ENCODE measurements at regions of chr15 and their contacts with region 1.

Region 1: DNA sequence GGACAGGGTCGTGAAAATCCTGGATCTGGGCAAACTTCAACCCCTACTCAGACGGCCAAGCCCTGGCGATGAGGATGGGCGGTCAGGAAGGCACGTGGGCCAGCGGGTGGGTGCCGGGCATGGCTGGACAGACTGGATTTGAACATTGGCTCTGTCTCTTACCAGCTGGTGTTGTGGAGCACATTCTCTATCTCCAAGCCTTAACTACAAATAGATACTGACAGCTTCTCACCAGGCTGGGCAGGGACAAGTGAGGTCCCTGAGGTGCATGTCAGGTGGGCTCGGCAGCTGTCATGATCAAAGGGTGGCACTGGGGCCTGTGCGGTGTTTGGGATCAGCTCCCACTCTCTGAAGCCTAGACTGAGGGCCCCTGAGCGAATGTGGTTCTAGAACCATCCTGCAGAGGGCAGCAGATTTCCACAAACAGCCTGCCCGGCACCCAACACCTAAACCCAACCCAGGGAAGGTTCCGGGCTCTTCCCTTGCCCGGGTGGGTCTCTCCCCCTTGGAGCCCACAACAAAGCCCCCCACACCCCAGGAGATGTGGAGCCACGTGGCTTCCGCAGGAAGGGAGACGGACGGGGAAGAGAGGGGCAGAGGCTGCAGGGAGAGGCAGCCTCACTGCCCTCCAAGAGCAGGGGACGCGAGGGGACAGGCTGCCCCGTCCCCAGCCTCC is 58.4 kb downstream of the RGMA start:
- DNase-seq: peak; percentile 77
- H3K4me3 ChIP-seq: no peak overlapping the region
- H3K27ac ChIP-seq: peak overlapping the region; percentile 8 to 59
- H3K4me1 ChIP-seq: peaks cover 31% of the 10 kb centered on the region
- H3K27me3 ChIP-seq: no peaks in the 10 kb centered on the region
- CTCF ChIP-seq: peak; percentile 72 to 89 (median 86)
- POLR2A ChIP-seq: no peak

Region 2: DNA sequence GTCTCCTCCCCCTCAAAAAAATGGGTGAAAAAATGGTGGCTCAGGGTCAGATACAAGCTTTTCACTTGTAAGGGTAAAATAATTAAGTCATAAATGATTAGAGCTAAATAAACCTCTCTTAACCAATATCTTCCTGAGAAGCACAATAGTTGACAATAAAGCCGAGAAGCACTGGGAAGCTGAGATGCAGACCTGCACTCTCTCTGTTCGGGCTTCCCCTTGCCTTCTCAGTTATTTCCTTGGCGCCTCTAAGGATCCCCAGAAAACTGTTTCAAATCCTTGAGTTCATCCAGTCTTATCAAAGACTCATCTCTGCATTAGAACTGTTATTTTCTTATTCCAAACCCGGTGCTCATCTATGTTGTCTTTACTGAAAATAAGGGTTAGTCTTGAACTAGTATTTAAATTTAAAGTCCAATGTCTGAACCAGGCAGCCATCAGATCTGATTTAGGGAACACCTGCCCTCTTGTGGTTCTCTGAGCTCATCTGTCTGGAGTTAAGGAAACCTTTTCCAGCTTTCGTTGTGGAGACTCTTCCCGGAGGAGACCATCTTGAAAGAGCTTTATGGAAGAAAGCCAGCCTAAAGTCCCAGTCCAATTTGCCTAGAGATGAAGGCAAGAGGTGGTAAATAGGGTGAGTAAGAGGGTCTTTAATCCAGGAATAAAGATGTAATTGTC is 944.4 kb after region 1 on chr15:
- intact Hi-C with region 1: loop called (anchors 2 kb)
- DNase-seq: peak; percentile 27
- H3K4me3 ChIP-seq: no peak overlapping the region
- H3K27ac ChIP-seq: no peak overlapping the region
- H3K4me1 ChIP-seq: no peaks in the 10 kb centered on the region
- H3K27me3 ChIP-seq: no peaks in the 10 kb centered on the region
- CTCF ChIP-seq: peak in 2 of 4 experiments; percentile 52 to 57
- POLR2A ChIP-seq: no peak